Aorta (tissue), 5 donors: ENCODE measurements at regions of chr2 and their contacts with region 1.

Region 1: DNA sequence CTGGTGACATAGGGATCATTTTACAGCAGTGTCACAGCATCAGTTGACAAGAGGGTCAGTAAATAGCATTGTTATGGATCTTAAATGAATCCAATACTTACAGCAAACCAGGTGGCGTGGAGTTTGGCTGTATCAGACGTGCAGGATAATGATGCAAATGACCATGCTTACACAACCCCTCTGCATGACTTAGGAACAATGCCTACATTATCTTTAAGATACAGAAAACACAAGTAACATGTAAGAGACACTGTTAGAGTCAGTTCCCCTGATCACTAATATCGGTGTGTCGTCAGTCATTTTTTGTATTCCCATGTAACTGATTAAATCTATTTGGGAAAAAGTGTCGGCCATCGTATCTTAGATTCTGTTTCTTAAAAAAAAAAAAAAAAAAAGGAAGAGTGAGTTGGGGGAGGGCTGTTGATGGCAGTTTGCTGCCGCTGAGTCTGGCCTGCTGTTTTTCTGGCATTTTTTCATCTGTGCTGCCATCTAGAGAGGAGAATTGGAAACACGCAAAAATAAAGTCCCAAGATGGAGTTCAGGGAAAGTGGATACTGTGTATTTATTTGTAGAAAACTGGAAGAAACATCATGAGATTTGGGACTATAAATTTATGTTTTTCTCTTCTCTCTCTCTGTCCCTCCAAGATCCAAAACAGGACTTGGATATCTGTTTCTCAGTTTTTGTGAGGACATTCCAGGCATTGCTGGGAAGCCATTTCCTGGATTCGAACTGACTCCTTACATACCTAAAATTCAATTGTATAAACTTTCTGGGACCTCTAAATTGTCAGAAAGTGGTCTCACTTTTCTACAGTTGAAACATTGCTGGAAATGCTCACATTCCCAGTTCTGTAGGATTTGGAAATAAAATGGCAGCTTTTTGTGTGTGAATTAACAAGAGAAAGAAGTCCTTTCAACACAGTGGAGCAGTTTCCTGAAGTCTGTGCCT is 60.3 kb upstream of the AGPS start:
- DNase-seq: peak in 1 of 2 donors; percentile 55
- ATAC-seq: peak; percentile 94
- H3K4me3 ChIP-seq: no peak overlapping the region
- H3K27ac ChIP-seq: peak overlapping the region in 1 of 2 donors; percentile 48
- H3K4me1 ChIP-seq: no peaks in the 10 kb centered on the region
- H3K27me3 ChIP-seq: no peaks in the 10 kb centered on the region

Region 2: DNA sequence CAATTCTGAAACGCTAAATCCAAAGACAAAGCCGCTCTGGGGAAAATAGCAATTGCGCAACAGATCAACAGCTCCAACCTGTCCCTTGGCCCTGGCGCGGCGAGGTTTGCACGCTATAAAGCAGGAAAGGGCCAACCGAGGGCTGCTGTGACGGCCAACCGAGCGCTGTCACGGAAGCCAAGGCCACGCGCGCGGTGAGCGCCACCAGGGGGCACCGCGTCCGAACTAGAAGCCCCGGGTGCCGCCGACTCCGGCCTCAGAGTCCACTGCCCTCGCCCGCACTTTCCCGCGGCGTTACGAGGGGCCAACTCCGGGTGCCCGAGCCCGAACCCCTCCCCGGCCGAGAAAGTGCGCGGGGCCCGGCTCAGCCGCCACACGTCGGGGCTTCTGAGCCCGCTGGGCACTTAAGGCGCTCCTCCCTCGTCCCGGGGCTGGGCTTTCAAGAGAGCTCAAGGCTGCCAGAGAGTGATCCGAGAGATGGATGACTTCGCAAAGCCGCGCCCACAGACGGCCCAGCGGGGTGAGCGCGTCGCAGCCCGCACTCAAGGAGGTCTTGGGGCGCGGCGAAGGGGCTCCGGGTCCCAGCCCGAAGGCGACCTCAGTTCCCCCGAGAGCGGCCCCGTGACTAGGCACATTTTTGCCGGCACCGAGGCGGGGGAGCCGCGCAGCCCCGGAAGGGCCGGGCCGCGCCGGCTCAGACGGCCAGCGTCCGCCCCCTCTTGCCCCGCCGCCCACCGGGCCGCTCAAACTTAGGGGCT is 68.7 kb before region 1 on chr2:
- intact Hi-C with region 1: loop called (anchors 1 to 5 kb)
- DNase-seq: peak; percentile 99 to 100
- ATAC-seq: peak; percentile 94
- H3K4me3 ChIP-seq: peak overlapping the region; percentile 90 to 94
- H3K27ac ChIP-seq: peak overlapping the region; percentile 98 to 99
- H3K4me1 ChIP-seq: no peaks in the 10 kb centered on the region
- H3K27me3 ChIP-seq: no peaks in the 10 kb centered on the region

Region 3: DNA sequence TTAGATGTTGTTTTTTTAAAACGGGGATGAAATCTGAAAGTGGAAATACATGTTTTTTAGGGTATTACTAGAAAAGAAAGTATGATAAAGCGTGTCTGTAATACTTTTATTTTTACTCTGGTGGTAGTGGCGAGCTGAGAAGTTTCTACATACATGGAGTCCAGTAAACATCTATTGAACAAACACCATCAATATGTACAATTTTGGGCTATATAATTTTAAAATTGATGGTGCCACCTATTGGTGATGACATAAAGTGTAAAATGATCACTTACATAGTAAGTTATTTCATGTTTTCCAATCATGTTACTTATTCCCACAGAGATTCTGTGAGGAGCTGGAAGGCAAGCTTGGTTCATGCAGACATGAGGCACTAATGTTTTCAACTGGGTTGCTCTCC is 36.3 kb before region 1 on chr2:
- intact Hi-C with region 1: loop called in 1 of 2 experiments (anchors 5 kb)
- DNase-seq: no peak
- ATAC-seq: peak; percentile 56
- H3K4me3 ChIP-seq: peak overlapping the region in 1 of 2 donors; percentile 69
- H3K27ac ChIP-seq: no peak overlapping the region
- H3K4me1 ChIP-seq: no peaks in the 10 kb centered on the region
- H3K27me3 ChIP-seq: no peaks in the 10 kb centered on the region

Region 4: DNA sequence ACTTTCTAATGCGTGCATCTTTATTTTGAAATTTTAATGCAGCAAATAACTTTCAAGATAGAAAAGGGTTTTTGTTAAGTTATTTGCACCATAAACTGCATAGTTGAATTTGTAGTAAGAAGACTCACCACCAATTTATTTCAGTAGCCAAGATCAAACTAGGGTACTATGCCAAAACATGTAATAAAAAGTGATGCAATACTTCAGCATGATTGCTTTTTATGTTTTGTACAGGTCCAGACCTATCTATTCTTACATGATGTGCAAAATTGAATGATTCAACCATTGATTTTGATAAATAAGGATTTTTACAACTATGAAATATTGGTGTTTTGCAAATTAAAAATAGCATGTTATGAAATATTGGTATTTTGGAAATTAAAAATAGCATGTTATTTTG is 87.0 kb after region 1 on chr2:
- intact Hi-C with region 1: loop called in 1 of 2 experiments (anchors 5 kb)
- DNase-seq: no peak
- ATAC-seq: no peak
- H3K4me3 ChIP-seq: no peak overlapping the region
- H3K27ac ChIP-seq: no peak overlapping the region
- H3K4me1 ChIP-seq: no peaks in the 10 kb centered on the region
- H3K27me3 ChIP-seq: no peaks in the 10 kb centered on the region

Region 5: GRCh38 chr2:177568390-177568789 is 236.1 kb after region 1 on chr2:
- intact Hi-C with region 1: no loop called
- DNase-seq: no peak
- ATAC-seq: no peak
- H3K4me3 ChIP-seq: no peak overlapping the region
- H3K27ac ChIP-seq: no peak overlapping the region
- H3K4me1 ChIP-seq: no peaks in the 10 kb centered on the region
- H3K27me3 ChIP-seq: no peaks in the 10 kb centered on the region

Region 6: GRCh38 chr2:177604271-177605065 is 272.2 kb after region 1 on chr2:
- intact Hi-C with region 1: loop called (anchors 5 kb)
- DNase-seq: no peak
- ATAC-seq: peak; percentile 76
- H3K4me3 ChIP-seq: no peak overlapping the region
- H3K27ac ChIP-seq: no peak overlapping the region
- H3K4me1 ChIP-seq: no peaks in the 10 kb centered on the region
- H3K27me3 ChIP-seq: no peaks in the 10 kb centered on the region

Region 7: DNA sequence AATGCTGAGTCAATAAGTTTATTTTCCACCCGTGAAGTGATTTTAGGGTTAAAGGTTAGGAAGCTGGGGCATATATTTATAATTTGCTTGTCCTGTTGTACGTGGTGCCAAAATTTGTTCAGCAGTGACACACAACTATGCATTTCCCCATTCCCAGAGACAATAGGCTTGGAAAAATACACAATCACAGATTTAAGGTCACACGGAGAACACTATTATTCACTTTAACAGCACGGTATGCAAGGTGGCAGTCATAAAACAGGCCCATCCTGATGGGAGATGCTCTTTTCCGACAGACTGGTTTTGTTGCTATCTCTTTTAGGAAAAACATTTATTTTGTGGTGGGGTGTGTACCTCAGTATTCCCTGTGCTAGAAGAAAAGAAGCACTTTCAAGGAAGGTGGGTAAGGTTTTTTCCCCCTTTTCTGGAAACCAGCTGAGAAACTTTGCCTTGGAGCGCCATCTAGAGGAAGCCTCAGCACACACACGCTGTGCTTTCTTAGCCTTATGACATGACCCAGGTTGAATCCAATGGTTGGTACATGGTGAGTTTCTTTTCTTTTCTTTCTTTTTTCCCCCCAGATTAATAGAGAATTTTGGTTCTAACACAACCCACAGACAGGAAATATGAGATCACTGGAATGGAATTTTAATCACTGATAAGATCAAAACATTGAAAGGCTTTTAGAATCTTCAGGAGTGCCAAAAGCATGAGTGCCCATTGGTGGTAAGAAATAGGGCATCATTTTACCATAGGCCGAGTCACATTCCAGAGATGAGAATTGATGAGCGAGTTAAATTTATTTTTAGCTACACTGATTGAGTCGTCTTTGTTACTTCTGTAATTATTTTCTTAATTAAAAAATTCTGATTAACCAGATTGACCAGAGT is 392.3 kb after region 1 on chr2:
- intact Hi-C with region 1: loop called (anchors 5 to 10 kb)
- DNase-seq: peak in 1 of 2 donors; percentile 55
- ATAC-seq: peak; percentile 67
- H3K4me3 ChIP-seq: no peak overlapping the region
- H3K27ac ChIP-seq: no peak overlapping the region
- H3K4me1 ChIP-seq: no peaks in the 10 kb centered on the region
- H3K27me3 ChIP-seq: peaks cover 2 to 5% of the 10 kb centered on the region in 2 donors

Region 8: DNA sequence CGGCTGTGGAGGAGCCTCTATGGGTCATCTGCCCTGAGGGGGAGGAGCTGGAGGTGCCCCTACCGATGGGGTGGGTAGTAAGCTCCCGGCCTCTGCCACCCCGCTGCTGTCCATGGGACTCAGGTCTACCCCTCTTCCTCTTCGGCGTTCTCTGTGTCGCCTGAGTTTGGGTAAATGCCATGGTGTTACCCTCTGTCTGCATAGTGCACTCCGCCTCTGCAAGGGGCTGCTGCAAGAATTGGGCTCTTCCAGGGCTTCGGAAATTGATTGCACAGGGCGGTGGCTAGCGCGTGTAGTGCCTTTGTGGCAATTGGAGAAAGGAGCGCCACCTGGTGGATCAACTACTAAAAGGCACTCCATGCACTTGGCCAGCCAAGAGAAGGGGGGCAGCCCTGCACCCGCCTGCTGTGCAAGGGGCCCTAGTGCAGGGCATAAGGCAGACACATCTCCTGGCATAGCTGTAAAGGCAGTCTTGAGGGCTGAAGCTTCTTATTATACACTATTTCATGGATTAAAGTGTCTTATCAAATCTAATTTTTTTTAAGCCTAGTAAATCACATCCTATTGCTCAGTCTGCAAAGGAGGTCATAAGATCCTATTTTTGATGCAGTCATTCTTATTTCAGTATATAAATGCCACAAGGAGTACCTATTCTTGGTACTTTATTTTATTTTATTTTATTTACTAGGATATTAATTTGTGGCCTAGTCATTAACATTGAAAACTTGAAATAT is 431.4 kb after region 1 on chr2:
- intact Hi-C with region 1: loop called in 1 of 2 experiments (anchors 10 kb)
- DNase-seq: peak; percentile 78 to 85
- ATAC-seq: peak; percentile 81
- H3K4me3 ChIP-seq: no peak overlapping the region
- H3K27ac ChIP-seq: no peak overlapping the region
- H3K4me1 ChIP-seq: no peaks in the 10 kb centered on the region
- H3K27me3 ChIP-seq: no peaks in the 10 kb centered on the region